Activated B cell treated with CpG ODN at 0.5 μM for 24 hours (primary cell): ENCODE measurements at regions of chr3 and their contacts with region 1.

Region 1: DNA sequence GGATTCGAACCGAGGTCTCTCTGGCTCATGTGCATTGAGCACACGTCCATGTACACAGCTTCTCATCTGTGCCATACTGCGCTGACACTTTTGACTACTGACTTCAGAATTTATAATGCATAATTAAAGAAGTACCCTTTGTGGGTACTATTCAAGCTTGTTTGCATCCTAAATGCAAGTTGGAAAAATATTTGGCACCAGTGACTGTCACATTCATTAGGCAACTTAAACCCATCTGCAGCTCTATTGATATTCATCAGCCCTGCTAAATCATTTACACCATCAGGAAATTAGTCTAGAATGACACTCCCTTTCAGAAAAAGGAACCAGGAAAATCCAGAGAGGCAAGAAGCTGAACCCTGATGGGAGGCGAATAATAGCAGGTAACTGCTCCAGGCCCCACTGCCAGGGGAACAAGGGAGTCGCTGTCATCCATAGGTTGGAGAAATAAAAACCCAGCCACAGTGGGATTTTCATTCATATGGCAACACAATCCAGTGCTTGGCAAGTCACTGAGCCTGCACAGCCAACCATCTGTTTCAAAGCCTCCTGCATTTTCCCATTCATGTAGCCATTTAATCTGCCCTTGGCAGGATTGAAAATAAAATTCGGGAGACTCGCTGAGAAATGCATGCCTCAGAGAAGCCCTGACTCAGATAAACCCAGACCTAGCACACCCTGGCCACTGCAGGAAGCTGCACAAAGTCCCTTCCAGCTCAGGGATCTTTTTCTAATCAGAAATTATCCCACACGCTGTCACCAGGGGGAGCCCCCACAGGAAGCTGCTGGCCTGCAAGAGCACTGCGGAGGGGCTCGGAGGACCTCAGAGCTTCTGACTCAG is 103.0 kb upstream of the VEPH1 start:
- DNase-seq: peak; percentile 36
- ATAC-seq: peak; percentile 93
- H3K4me3 Mint-ChIP-seq: no peak overlapping the region
- H3K27ac Mint-ChIP-seq: no peak overlapping the region
- H3K4me1 Mint-ChIP-seq: peaks cover 2% of the 10 kb centered on the region
- H3K27me3 Mint-ChIP-seq: peaks cover 20% of the 10 kb centered on the region
- CTCF ChIP-seq: no peak

Region 2: GRCh38 chr3:157746391-157746790 is 140.2 kb after region 1 on chr3:
- CTCF ChIA-PET with region 1: no interaction called
- POLR2A ChIA-PET with region 1: no interaction called
- intact Hi-C with region 1: no loop called
- DNase-seq: no peak
- ATAC-seq: no peak
- H3K4me3 Mint-ChIP-seq: no peak overlapping the region
- H3K27ac Mint-ChIP-seq: no peak overlapping the region
- H3K4me1 Mint-ChIP-seq: no peaks in the 10 kb centered on the region
- H3K27me3 Mint-ChIP-seq: no peaks in the 10 kb centered on the region
- CTCF ChIP-seq: no peak

Region 3: GRCh38 chr3:158313338-158313927 is 707.2 kb after region 1 on chr3:
- CTCF ChIA-PET with region 1: interaction called, 6 read pairs
- POLR2A ChIA-PET with region 1: no interaction called
- intact Hi-C with region 1: loop called (anchors 1 kb)
- DNase-seq: no peak
- ATAC-seq: no peak
- H3K4me3 Mint-ChIP-seq: no peak overlapping the region
- H3K27ac Mint-ChIP-seq: no peak overlapping the region
- H3K4me1 Mint-ChIP-seq: no peaks in the 10 kb centered on the region
- H3K27me3 Mint-ChIP-seq: no peaks in the 10 kb centered on the region
- CTCF ChIP-seq: no peak

Region 4: GRCh38 chr3:158434412-158435038 is 828.3 kb after region 1 on chr3:
- CTCF ChIA-PET with region 1: interaction called, 38 read pairs
- POLR2A ChIA-PET with region 1: no interaction called
- intact Hi-C with region 1: loop called (anchors 1 kb)
- DNase-seq: no peak
- ATAC-seq: peak; percentile 54
- H3K4me3 Mint-ChIP-seq: no peak overlapping the region
- H3K27ac Mint-ChIP-seq: no peak overlapping the region
- H3K4me1 Mint-ChIP-seq: no peaks in the 10 kb centered on the region
- H3K27me3 Mint-ChIP-seq: no peaks in the 10 kb centered on the region
- CTCF ChIP-seq: no peak

Region 5: DNA sequence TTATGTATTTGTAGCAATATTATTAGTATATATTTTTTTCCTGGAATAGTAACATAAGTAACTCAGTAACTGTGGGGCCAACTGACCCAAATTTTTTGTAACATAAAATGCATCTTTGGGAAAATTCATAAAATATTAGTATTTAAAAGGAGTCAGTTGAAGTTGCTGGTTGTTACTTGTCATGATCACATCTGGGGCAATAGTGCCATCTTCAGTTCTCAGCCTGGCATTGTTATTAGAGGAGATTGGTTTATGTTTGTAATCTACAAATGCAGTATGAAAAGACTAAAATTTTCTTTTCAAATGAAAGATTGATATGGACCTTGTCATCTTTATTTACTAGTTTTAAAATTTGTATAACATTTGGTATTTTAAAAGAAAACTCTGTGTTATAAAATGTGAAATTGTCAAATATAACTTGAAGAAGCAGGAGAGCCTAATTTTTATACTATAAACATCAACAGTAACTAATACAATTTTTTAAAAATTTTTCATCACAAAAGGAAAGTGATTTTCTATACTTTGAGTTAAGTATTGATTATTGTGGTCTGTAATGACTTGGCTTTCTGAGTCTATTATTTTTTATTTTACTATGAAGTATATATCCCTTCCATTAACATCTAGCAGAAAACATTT is 926.0 kb after region 1 on chr3:
- CTCF ChIA-PET with region 1: interaction called, 12 read pairs
- POLR2A ChIA-PET with region 1: no interaction called
- intact Hi-C with region 1: loop called (anchors 1 kb)
- DNase-seq: no peak
- ATAC-seq: no peak
- H3K4me3 Mint-ChIP-seq: no peak overlapping the region
- H3K27ac Mint-ChIP-seq: no peak overlapping the region
- H3K4me1 Mint-ChIP-seq: no peaks in the 10 kb centered on the region
- H3K27me3 Mint-ChIP-seq: no peaks in the 10 kb centered on the region
- CTCF ChIP-seq: no peak

Region 6: DNA sequence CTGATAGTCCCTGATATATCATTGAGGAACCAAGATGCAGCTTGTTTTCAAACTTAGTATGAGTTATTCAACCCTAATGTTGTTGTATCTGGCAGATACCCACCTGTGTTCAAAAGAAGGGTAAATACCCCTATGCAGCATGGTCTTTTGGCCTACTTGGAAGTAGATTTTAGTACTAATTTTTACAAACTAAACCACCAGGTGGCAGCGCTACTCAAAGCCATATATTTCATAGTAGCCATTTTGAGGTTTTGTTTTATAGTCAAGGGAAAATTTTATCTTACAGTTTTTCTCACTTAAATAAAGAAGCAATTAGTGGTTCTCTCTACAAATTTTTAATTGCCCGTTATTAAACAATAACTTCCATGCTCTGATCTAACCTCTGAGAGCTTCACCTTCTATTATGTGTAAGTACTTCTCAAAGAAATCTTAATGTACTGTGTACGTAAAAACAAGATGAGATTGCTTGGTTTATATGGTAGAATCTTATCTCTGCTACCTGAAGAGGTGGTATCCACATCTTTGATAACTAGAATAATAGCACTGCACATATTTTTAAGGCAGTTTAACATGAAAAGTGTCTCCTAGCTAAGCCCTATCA is 933.3 kb after region 1 on chr3:
- CTCF ChIA-PET with region 1: interaction called, 12 read pairs
- POLR2A ChIA-PET with region 1: no interaction called
- intact Hi-C with region 1: no loop called
- DNase-seq: no peak
- ATAC-seq: no peak
- H3K4me3 Mint-ChIP-seq: no peak overlapping the region
- H3K27ac Mint-ChIP-seq: no peak overlapping the region
- H3K4me1 Mint-ChIP-seq: no peaks in the 10 kb centered on the region
- H3K27me3 Mint-ChIP-seq: no peaks in the 10 kb centered on the region
- CTCF ChIP-seq: peak; percentile 50

Region 7: GRCh38 chr3:158790901-158791589 is 1184.8 kb after region 1 on chr3:
- CTCF ChIA-PET with region 1: no interaction called
- POLR2A ChIA-PET with region 1: no interaction called
- intact Hi-C with region 1: loop called (anchors 5 kb)
- DNase-seq: no peak
- ATAC-seq: peak; percentile 56
- H3K4me3 Mint-ChIP-seq: peak overlapping the region; percentile 77
- H3K27ac Mint-ChIP-seq: no peak overlapping the region
- H3K4me1 Mint-ChIP-seq: peaks cover 3% of the 10 kb centered on the region
- H3K27me3 Mint-ChIP-seq: peaks cover 2% of the 10 kb centered on the region
- CTCF ChIP-seq: no peak